ENCODE measurements at regions of chr14 and their contacts with region 1.

Region 1: GRCh38 chr14:81170104-81170828 is 50.5 kb downstream of the GTF2A1 start:
- DNase-seq: peak; percentile 82
- H3K4me3 Mint-ChIP-seq: peak overlapping the region; percentile 89
- H3K27ac Mint-ChIP-seq: peak overlapping the region; percentile 94
- H3K4me1 Mint-ChIP-seq: peaks cover 40% of the 10 kb centered on the region
- H3K27me3 Mint-ChIP-seq: no peaks in the 10 kb centered on the region

Region 2: GRCh38 chr14:80996049-80996901 is 174.0 kb before region 1 on chr14:
- intact Hi-C with region 1: loop called (anchors 1 kb)
- DNase-seq: no peak
- H3K4me3 Mint-ChIP-seq: no peak overlapping the region
- H3K27ac Mint-ChIP-seq: no peak overlapping the region
- H3K4me1 Mint-ChIP-seq: peaks cover 8% of the 10 kb centered on the region
- H3K27me3 Mint-ChIP-seq: peaks cover 34% of the 10 kb centered on the region

Region 3: DNA sequence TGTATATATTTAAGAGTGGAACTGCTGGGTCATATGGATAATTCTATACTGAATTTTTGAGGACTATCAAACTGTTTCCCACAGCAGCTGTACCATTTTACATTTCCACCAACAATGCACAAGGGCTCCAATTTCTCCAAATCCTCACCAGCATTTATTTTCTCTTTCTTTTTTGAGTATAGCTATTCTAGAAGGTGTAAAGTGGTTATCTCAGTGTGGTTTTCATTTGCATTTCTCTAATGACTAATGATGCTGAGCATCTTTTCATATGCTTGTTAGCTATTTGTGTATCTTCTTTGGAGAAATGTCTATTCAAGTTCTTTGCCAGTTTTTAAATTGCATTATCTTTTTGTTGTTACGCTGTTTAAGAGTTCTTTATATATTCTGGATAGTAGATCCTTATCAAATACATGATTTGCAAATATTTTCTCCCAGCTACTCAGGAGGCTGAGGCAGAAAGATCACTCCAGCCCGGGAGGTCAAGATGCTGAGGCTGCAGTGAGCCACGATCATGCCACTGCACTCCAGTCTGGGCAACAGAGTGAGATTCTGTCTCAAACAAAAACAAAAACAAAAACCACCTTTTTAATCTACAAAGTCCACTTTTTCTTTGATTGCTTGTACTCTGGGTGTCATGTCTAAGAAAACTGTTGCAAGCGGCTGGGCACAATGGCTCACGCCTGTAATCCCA is 17.7 kb after region 1 on chr14:
- intact Hi-C with region 1: loop called (anchors 2 kb)
- DNase-seq: no peak
- H3K4me3 Mint-ChIP-seq: no peak overlapping the region
- H3K27ac Mint-ChIP-seq: peak overlapping the region; percentile 21
- H3K4me1 Mint-ChIP-seq: peaks cover 50% of the 10 kb centered on the region
- H3K27me3 Mint-ChIP-seq: no peaks in the 10 kb centered on the region

Region 4: DNA sequence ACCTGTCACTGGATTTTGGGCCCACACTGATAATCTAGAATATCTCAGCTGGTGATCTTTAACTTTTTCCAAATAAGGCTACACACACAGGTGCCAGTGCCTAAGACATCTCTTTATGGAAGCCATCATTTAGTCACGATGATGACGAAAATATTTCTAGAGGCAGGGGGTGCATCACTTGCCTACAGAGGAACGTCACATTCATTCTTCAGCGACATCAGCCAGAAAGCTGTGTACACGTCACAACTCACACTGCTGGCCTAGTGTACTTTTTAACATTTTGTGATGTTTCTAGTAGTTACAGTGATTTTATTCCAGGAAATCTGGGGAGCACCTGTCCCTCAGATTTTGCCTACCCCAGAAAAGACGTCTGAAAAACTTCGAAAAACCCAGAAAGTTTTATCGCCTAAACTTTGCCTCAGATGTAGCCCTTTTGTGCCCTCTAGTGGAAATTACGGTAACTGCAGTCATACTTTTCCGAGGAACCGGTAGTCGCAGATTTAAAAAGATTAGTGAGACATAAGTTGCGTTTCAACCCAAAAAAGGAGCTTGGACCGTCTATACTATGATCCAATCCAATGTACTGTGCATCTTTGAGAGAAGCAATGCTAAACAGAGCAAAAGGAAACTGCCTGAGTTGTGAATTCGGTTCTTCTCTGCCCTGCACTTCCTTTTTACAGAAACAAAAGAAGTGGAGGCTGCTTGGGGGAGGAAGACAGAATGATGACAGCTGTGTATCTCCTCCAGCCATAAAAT is 294.2 kb after region 1 on chr14:
- intact Hi-C with region 1: loop called (anchors 2 kb)
- DNase-seq: peak; percentile 57
- H3K4me3 Mint-ChIP-seq: peak overlapping the region; percentile 77
- H3K27ac Mint-ChIP-seq: peak overlapping the region; percentile 63
- H3K4me1 Mint-ChIP-seq: peaks cover 12% of the 10 kb centered on the region
- H3K27me3 Mint-ChIP-seq: no peaks in the 10 kb centered on the region

Region 5: DNA sequence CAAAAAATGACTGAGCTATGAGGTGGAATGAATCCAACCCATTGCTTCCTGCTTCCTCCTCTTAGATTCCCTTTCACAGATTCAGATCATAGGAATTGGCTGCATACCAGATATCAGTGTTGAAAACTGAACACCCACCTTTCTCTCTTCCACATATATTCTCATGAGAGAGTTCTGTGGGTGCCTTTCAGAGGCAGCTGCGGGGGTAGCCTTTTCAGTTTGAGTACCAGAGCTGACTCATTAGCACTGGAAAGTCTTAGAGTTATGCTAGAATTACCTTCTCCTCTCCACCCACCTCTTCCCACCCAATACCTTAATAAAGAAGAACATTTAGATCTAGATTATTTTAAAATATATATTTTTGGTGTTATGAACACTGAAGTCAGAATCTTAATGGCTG is 858.8 kb after region 1 on chr14:
- intact Hi-C with region 1: no loop called
- DNase-seq: no peak
- H3K4me3 Mint-ChIP-seq: no peak overlapping the region
- H3K27ac Mint-ChIP-seq: no peak overlapping the region
- H3K4me1 Mint-ChIP-seq: no peaks in the 10 kb centered on the region
- H3K27me3 Mint-ChIP-seq: no peaks in the 10 kb centered on the region

Measured in activated T-helper 1 cell treated with anti-CD3 and anti-CD28 coated beads, Interleukin-12 subunit alpha, Interleukin-12 subunit beta, Interleukin-2, Interleukin-4 antibody, amounts not matched to agents 30 ng/mL and 10 ng/mL and 1 ng/mL, durations not matched to agents 14 hours and 24 hours and 36 hours (primary cell).